Ascending aorta (tissue), 2 donors: ENCODE measurements at regions of chr2 and their contacts with region 1.

Region 1: GRCh38 chr2:61764035-61764800 is 89.6 kb downstream of the FAM161A start:
- DNase-seq: peak; percentile 90 to 99
- H3K4me3 ChIP-seq: peak overlapping the region; percentile 55 to 88
- H3K27ac ChIP-seq: peak overlapping the region; percentile 97 to 99
- H3K4me1 ChIP-seq: no peaks in the 10 kb centered on the region
- H3K27me3 ChIP-seq: no peaks in the 10 kb centered on the region
- CTCF ChIP-seq: no peak

Region 2: GRCh38 chr2:60881047-60881932 is 882.9 kb before region 1 on chr2 and contains the start of gene REL:
- intact Hi-C with region 1: loop called (anchors 5 kb)
- DNase-seq: peak; percentile 51 to 92
- H3K4me3 ChIP-seq: peak within 1 kb of the TSS; percentile 85 to 93
- H3K27ac ChIP-seq: peak within 1 kb of the TSS; percentile 91 to 95
- H3K4me1 ChIP-seq: peaks cover 0 to 6% of the 10 kb centered on the region in 2 donors
- H3K27me3 ChIP-seq: no peaks in the 10 kb centered on the region
- CTCF ChIP-seq: no peak
- total RNA-seq, gene REL: 5.3 TPM

Region 3: GRCh38 chr2:61176755-61177726 is 587.2 kb before region 1 on chr2:
- intact Hi-C with region 1: loop called (anchors 1 kb)
- DNase-seq: peak; percentile 76 to 96
- H3K4me3 ChIP-seq: peak overlapping the region; percentile 79 to 90
- H3K27ac ChIP-seq: peak overlapping the region; percentile 98 to 99
- H3K4me1 ChIP-seq: peaks cover 12 to 40% of the 10 kb centered on the region in 2 donors
- H3K27me3 ChIP-seq: no peaks in the 10 kb centered on the region
- CTCF ChIP-seq: peak; percentile 2 to 12 (median 7)

Region 4: DNA sequence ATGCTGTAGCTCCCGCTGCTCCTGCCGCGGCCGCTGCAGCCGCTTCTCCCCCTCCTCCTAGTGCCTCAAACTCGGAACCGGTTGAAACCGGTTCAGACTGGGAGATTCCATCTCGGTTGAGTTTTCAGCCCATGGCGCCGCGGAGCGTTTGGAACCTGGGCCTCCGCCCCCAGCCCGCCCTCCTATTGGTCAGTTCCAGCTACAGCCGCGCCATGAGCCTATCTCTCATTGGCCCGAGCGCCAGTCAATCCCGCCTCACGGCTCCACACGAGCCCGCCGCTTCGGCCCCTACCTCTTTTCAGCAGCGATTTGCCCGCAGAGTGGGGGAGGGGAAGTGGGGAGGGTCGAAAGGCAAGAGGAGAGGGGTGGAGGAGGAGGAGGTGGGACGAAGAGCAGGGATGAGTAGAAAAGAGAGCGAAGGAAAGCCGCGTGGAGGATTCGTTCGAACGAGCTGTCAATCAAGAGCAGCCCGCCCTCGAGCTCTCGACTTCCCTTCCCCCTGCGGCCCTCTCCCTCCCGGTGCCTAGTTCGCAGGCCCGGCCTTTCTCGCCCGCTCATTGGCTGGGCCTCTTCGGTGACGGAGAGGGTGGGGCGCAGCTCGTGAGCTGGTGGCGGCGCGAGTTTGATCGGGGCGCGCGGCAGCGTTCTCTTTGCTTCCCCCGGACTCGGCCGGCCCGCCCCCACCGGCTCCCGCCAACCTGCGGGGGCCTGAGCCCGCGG is 225.9 kb before region 1 on chr2 and contains the start of gene XPO1:
- intact Hi-C with region 1: loop called (anchors 1 kb)
- DNase-seq: peak; percentile 97 to 99
- H3K4me3 ChIP-seq: peak within 1 kb of the TSS; percentile 86 to 98
- H3K27ac ChIP-seq: peak within 1 kb of the TSS; percentile 96 to 98
- H3K4me1 ChIP-seq: peaks cover 0 to 16% of the 10 kb centered on the region in 2 donors
- H3K27me3 ChIP-seq: no peaks in the 10 kb centered on the region
- CTCF ChIP-seq: no peak
- total RNA-seq, gene XPO1: 47.9 TPM

Region 5: DNA sequence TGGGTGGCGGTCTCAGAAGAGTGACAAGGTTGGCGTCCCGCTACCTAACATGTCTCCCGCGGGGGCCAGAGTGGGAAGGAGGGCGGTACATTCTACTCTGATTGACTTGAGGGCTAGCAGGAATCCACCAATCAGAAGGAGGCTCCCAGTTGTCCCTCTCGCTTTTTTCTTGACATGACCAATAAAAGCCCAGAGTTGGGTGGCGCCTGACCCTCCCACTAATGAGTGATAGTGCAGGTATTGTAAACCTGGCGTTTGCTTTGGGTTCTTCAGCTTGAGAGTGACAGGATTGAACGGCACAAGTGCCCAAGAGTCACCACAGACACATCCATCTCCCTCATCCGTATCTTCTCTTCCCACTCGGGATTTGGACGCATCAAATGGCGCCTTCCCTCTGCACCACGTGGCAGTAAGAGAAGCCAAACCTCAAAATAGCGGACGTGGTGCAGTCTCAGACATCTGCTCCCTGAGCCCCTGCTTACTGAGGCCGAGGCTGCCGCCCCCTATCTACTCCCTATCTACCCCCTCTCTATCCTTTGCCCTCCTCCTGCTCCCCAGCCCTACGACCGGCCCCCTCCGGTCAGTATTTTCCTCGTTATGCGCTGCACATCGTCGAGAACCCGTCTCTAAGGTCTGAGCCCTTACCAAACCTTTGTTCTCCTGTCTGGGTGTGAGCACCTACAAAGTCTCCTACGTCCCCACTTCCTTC is 90.4 kb after region 1 on chr2:
- intact Hi-C with region 1: loop called (anchors 1 kb)
- DNase-seq: peak; percentile 76 to 94
- H3K4me3 ChIP-seq: peak overlapping the region; percentile 76 to 94
- H3K27ac ChIP-seq: peak overlapping the region; percentile 93 to 95
- H3K4me1 ChIP-seq: peaks cover 0 to 4% of the 10 kb centered on the region in 2 donors
- H3K27me3 ChIP-seq: no peaks in the 10 kb centered on the region
- CTCF ChIP-seq: no peak

Region 6: GRCh38 chr2:62195421-62196277 is 431.4 kb after region 1 on chr2 and contains the start of gene B3GNT2:
- intact Hi-C with region 1: loop called (anchors 10 kb)
- DNase-seq: peak in 1 of 2 donors; percentile 88
- H3K4me3 ChIP-seq: peak within 1 kb of the TSS; percentile 90 to 97
- H3K27ac ChIP-seq: peak within 1 kb of the TSS; percentile 90 to 91
- H3K4me1 ChIP-seq: peaks cover 0 to 21% of the 10 kb centered on the region in 2 donors
- H3K27me3 ChIP-seq: no peaks in the 10 kb centered on the region
- CTCF ChIP-seq: no peak
- total RNA-seq, gene B3GNT2: 15.2 TPM